HEK293T (cell line): ENCODE measurements at regions of chr18 and their contacts with region 1.

Region 1: GRCh38 chr18:25153426-25153825 is 198.5 kb downstream of the ZNF521 start:
- DNase-seq: no peak

Region 2: GRCh38 chr18:24543805-24544498 is 609.5 kb before region 1 on chr18:
- CTCF ChIA-PET with region 1: interaction called, 10 read pairs
- POLR2A ChIA-PET with region 1: no interaction called
- DNase-seq: peak; percentile 70

Region 3: DNA sequence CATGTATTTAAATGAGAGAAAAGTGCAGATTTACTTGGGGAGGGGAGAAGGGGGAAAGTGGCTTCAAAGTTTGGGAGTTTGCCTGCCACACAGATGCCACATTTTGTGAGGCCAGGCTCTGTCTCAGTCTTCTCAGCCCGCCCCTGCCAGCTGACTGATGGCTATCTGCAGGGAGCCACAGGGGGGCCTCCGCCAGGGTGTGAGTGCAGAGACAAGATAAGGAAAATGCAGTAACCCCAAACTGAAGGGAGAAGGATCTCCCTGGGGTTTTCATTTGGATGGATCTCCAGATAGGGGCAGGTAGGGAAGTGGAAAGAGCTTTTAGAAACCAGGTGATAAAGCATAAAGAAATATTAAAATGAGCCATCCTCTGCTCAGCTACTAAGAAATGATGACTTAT is 69.8 kb after region 1 on chr18:
- CTCF ChIA-PET with region 1: no interaction called
- POLR2A ChIA-PET with region 1: no interaction called
- DNase-seq: no peak